HEK293 (cell line): ENCODE measurements at regions of chr11 and their contacts with region 1.

Region 1: DNA sequence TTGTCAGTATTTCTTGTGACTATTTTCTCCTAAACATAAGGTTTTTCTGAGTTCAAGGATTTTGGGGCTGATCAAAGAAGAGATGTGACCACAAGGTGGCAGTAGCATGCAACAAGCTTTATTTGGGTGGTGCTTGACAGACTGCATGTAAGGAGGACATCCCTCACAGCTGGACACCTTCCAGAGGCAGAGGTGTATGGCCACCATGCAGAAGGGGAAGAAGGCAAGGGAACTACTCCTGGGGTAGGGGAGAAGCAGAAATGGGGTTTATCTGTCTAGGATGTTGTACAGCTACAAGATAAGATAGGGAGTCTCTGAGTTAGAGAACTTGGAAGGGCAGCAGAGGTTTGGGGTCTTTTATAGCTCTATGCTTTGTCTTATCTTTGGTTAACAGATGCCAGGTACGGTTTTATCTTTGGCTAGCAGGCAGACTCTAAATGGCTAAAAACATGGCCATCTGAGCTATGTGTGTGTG is 5.1 kb upstream of the BIRC2 start:
- H3K4me3 ChIP-seq: no peak overlapping the region
- H3K27ac ChIP-seq: no peak overlapping the region
- H3K4me1 ChIP-seq: no peaks in the 10 kb centered on the region
- CTCF ChIP-seq: 0 out of 2 replicates have a peak, but pooled peaks have one; percentile 27

Region 2: GRCh38 chr11:101960216-101960615 is 381.7 kb before region 1 on chr11:
- CTCF ChIA-PET with region 1: no interaction called
- POLR2A ChIA-PET with region 1: no interaction called
- H3K4me3 ChIP-seq: no peak overlapping the region
- H3K27ac ChIP-seq: no peak overlapping the region
- H3K4me1 ChIP-seq: no peaks in the 10 kb centered on the region
- CTCF ChIP-seq: no peak

Region 3: DNA sequence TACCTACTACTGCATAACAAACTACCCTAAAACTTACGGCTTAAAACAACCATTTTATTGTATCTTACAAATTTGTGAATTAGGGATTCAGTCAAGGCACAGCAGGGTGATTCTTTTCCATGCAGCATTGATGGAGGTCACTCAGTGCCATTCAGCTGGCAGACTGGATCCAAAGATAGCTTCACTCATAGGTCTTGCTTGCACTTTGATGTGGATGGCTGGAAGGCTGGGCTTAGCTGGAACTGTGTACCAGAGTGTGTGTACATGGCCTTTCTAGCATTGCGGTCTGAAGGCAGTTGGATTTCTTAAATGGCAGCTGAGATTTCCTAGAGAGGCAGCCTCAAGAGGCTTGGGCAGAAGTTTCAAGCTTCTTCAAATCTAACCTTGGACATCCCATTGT is 206.6 kb before region 1 on chr11:
- CTCF ChIA-PET with region 1: no interaction called
- POLR2A ChIA-PET with region 1: no interaction called
- H3K4me3 ChIP-seq: no peak overlapping the region
- H3K27ac ChIP-seq: no peak overlapping the region
- H3K4me1 ChIP-seq: no peaks in the 10 kb centered on the region
- CTCF ChIP-seq: no peak

Region 4: DNA sequence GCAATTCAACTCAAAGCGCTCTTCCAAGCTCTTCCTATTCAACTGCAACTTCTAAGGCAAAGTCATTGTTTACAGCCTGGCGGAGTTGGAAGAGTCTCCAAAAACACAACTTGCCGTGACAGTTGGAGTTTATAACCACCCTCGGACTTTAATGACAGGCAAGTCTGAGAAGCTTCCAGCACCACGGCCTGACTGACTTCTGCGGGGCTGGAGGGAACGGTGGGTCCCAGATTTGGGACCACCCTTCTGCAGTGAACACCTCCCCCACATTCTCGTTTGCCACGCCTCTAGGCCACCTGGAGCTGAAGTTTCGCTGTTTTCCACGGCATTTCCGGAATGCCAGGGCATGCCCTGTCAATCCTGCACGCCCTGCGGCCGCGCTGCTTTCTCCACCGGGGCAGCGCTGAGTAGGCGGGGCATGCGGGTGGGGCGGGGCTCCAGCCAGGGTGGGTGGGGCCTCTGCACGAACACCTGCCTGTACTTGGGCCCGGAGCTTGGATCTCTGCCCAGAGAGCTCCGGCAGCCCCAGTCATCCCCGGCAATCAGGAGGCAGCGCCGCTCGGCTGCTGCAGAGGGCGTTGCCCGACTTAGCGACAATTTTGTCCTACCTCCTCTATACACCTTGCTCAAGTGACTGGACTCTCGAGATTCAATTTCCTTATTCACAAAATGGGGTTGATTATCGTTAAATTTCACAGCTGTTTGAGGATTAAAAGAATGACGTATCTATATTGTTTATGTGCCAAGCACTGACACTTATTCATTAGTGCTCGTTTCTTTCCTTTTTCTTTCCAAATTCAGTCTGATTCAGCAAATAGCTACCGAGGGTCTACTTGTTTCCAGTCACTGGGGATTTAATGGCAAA is 73.3 kb before region 1 on chr11:
- CTCF ChIA-PET with region 1: interaction called, 11 read pairs
- POLR2A ChIA-PET with region 1: no interaction called
- H3K4me3 ChIP-seq: peak overlapping the region; percentile 25
- H3K27ac ChIP-seq: no peak overlapping the region; the same call in 1 of the 2 replicates
- H3K4me1 ChIP-seq: no peaks in the 10 kb centered on the region
- CTCF ChIP-seq: no peak; the same call in 1 of the 2 replicates

Region 5: GRCh38 chr11:102317099-102317767 is 24.6 kb before region 1 on chr11 and contains the start of gene BIRC3:
- CTCF ChIA-PET with region 1: interaction called, 11 read pairs
- POLR2A ChIA-PET with region 1: no interaction called
- H3K4me3 ChIP-seq: peak within 1 kb of the TSS; percentile 48
- H3K27ac ChIP-seq: no peak within 1 kb of the TSS
- H3K4me1 ChIP-seq: no peaks in the 10 kb centered on the region
- CTCF ChIP-seq: peak; percentile 98

Region 6: GRCh38 chr11:102495161-102496042 is 153.5 kb after region 1 on chr11:
- CTCF ChIA-PET with region 1: interaction called, 28 read pairs
- POLR2A ChIA-PET with region 1: no interaction called
- H3K4me3 ChIP-seq: no peak overlapping the region
- H3K27ac ChIP-seq: no peak overlapping the region
- H3K4me1 ChIP-seq: no peaks in the 10 kb centered on the region
- CTCF ChIP-seq: no peak

Region 7: DNA sequence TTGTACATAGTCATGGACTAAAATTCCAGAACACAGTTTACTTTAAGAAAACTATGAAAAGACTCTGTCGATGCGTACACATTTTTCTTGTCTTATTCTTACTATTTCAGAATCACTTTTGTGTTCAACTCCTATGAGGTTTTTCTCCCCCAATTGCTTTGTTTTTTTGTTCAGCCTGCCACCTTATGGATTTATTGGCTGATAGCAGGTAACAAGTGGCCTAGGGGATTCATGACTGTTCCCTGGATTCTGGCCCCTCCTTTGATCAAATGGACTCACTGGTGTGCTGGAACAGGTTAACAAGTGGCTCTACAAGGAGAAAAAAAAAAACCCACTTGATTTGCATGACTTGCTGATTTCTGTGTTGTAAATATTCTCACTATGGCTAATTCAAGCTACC is 272.6 kb after region 1 on chr11:
- CTCF ChIA-PET with region 1: interaction called, 33 read pairs
- POLR2A ChIA-PET with region 1: interaction called, 5 read pairs
- H3K4me3 ChIP-seq: no peak overlapping the region
- H3K27ac ChIP-seq: no peak overlapping the region
- H3K4me1 ChIP-seq: no peaks in the 10 kb centered on the region; the same call in 1 of the 2 replicates
- CTCF ChIP-seq: no peak